B cell (primary cell): ENCODE measurements at regions of chr12 and their contacts with region 1.

Region 1: DNA sequence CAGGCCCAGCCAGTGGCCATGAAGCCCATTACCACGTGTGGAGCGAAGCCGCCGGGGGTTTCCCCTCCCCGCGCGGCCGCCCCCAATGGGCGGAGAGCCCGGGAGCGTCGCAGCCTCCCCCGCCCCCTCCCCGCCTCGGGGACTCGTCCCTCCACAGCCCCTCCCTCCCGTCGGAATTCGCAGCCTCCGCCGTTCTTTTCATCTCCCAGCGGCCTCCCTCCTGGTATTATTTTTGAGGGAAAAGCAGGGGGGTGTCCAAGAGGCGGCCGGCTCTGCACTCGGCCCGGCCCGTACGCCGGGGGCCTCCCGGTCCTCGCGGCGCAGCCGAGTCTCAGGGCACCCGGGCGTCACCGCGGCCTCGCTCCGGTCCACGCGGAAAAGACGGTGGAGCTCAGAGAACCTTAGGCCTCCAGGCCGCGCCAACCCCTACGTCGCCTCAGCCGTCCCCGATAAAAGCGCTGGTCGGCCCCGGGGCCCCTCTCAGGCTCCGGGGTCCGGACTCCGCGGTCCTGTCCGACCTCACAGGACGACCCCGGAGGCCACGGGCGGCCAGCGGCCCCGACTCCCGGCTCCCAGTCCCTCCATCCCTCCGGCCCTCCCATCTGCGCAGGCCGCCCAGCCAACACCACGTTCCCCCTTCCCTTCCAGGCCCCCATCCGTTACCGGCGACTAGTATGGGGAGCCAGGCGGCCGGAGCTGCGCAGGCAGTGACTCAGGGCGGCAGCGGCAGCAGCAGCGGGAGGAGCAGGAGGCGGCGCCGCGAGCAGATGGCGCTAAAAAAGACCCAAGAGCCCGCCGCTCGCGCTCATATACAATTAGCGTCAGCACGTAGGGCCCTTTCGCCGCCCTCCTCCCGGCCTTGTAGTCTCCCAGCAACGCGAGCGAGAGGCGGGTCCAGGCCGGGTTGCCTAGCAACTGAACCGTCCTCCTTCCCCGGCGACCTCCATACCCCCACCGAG is at the start of gene NAP1L1:
- DNase-seq: peak; percentile 98
- ATAC-seq: peak; percentile 82
- H3K4me3 ChIP-seq: peak within 1 kb of the TSS; percentile 56 to 94 (median 89)
- H3K4me3 Mint-ChIP-seq: peak within 1 kb of the TSS; percentile 99
- H3K27ac ChIP-seq: peak within 1 kb of the TSS; percentile 96 to 98
- H3K27ac Mint-ChIP-seq: peak within 1 kb of the TSS; percentile 99
- H3K4me1 ChIP-seq: peaks cover 26 to 44% of the 10 kb centered on the region in 2 donors
- H3K4me1 Mint-ChIP-seq: peaks cover 50% of the 10 kb centered on the region
- H3K27me3 ChIP-seq: no peaks in the 10 kb centered on the region
- H3K27me3 Mint-ChIP-seq: no peaks in the 10 kb centered on the region
- CTCF ChIP-seq: no peak
- total RNA-seq, gene NAP1L1: 751 and 766 TPM in 2 replicates

Region 2: GRCh38 chr12:75390899-75391538 is 693.2 kb before region 1 on chr12 and contains the start of gene GLIPR1L2:
- CTCF ChIA-PET with region 1: interaction called, 3 read pairs
- POLR2A ChIA-PET with region 1: no interaction called
- intact Hi-C with region 1: loop called (anchors 1 kb)
- DNase-seq: peak; percentile 94
- ATAC-seq: peak; percentile 94
- H3K4me3 ChIP-seq: peak within 1 kb of the TSS; percentile 66 to 85 (median 75)
- H3K4me3 Mint-ChIP-seq: peak within 1 kb of the TSS; percentile 98
- H3K27ac ChIP-seq: peak within 1 kb of the TSS; percentile 73 to 85
- H3K27ac Mint-ChIP-seq: peak within 1 kb of the TSS; percentile 99
- H3K4me1 ChIP-seq: peaks cover 23 to 24% of the 10 kb centered on the region in 2 donors
- H3K4me1 Mint-ChIP-seq: peaks cover 33% of the 10 kb centered on the region
- H3K27me3 ChIP-seq: no peaks in the 10 kb centered on the region
- H3K27me3 Mint-ChIP-seq: no peaks in the 10 kb centered on the region
- CTCF ChIP-seq: peak; percentile 81
- total RNA-seq, gene GLIPR1L2: 0.46 and 0.91 TPM in 2 replicates

Region 3: GRCh38 chr12:76020731-76021672 is 63.2 kb before region 1 on chr12:
- CTCF ChIA-PET with region 1: no interaction called
- POLR2A ChIA-PET with region 1: no interaction called
- intact Hi-C with region 1: no loop called
- DNase-seq: no peak
- ATAC-seq: no peak
- H3K4me3 ChIP-seq: no peak overlapping the region
- H3K4me3 Mint-ChIP-seq: no peak overlapping the region
- H3K27ac ChIP-seq: no peak overlapping the region
- H3K27ac Mint-ChIP-seq: peak overlapping the region; percentile 18
- H3K4me1 ChIP-seq: no peaks in the 10 kb centered on the region
- H3K4me1 Mint-ChIP-seq: peaks cover 10% of the 10 kb centered on the region
- H3K27me3 ChIP-seq: peaks cover 0 to 7% (median 5%) of the 10 kb centered on the region in 4 experiments
- H3K27me3 Mint-ChIP-seq: peaks cover 38% of the 10 kb centered on the region
- CTCF ChIP-seq: no peak

Region 4: GRCh38 chr12:76031537-76032073 is 52.6 kb before region 1 on chr12 and contains the start of gene PHLDA1:
- CTCF ChIA-PET with region 1: interaction called, 4 read pairs
- POLR2A ChIA-PET with region 1: no interaction called
- intact Hi-C with region 1: loop called (anchors 1 kb)
- DNase-seq: peak; percentile 93
- ATAC-seq: peak; percentile 87
- H3K4me3 ChIP-seq: peak within 1 kb of the TSS; percentile 48 to 89 (median 79)
- H3K4me3 Mint-ChIP-seq: peak within 1 kb of the TSS; percentile 96
- H3K27ac ChIP-seq: peak within 1 kb of the TSS; percentile 19 to 81
- H3K27ac Mint-ChIP-seq: peak within 1 kb of the TSS; percentile 92
- H3K4me1 ChIP-seq: peaks cover 18 to 23% of the 10 kb centered on the region in 2 donors
- H3K4me1 Mint-ChIP-seq: peaks cover 25% of the 10 kb centered on the region
- H3K27me3 ChIP-seq: peaks cover 2 to 29% (median 25%) of the 10 kb centered on the region in 4 experiments
- H3K27me3 Mint-ChIP-seq: peaks cover 23% of the 10 kb centered on the region
- CTCF ChIP-seq: peak; percentile 48
- total RNA-seq, gene PHLDA1: 1.7 TPM in 2 replicates

Region 5: DNA sequence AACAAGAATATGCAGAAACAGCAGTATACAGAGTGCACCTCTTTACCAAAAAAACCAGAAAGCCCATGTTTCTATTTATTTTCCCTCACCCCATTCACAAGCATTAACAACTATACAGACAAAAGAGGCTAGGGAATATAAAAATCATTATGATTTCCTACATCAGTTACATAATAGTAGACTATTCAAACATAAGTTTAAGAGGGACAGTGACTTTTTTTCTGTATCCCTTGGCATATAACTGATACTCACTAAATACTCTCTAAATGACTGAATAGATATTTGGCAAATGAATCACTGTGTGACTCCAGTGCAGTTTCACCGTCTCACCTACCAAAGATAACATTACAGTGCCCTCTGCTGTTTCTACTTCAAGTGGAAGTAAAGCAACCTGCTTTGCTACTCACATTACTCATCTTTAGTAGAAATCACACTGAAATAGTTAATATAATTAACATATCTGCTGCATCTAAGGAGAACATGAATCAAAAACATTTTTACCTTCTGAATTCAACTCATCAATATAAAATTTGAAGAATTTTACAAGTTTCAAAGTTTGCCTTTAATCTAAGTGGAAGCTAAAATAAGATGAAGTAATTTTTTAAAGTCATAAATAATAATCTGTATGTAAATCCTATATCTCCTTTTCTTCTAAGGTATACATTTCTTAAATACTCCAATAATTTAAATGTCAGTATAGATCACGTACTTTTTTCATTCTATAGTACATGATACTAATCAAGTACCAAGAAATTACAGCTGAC is 371.6 kb after region 1 on chr12:
- CTCF ChIA-PET with region 1: no interaction called
- POLR2A ChIA-PET with region 1: no interaction called
- intact Hi-C with region 1: loop called (anchors 2 kb)
- DNase-seq: peak; percentile 50
- ATAC-seq: peak; percentile 41
- H3K4me3 ChIP-seq: no peak overlapping the region
- H3K4me3 Mint-ChIP-seq: no peak overlapping the region
- H3K27ac ChIP-seq: no peak overlapping the region
- H3K27ac Mint-ChIP-seq: no peak overlapping the region
- H3K4me1 ChIP-seq: peaks cover 0 to 4% of the 10 kb centered on the region in 2 donors
- H3K4me1 Mint-ChIP-seq: peaks cover 13% of the 10 kb centered on the region
- H3K27me3 ChIP-seq: no peaks in the 10 kb centered on the region
- H3K27me3 Mint-ChIP-seq: no peaks in the 10 kb centered on the region
- CTCF ChIP-seq: peak; percentile 70

Region 6: DNA sequence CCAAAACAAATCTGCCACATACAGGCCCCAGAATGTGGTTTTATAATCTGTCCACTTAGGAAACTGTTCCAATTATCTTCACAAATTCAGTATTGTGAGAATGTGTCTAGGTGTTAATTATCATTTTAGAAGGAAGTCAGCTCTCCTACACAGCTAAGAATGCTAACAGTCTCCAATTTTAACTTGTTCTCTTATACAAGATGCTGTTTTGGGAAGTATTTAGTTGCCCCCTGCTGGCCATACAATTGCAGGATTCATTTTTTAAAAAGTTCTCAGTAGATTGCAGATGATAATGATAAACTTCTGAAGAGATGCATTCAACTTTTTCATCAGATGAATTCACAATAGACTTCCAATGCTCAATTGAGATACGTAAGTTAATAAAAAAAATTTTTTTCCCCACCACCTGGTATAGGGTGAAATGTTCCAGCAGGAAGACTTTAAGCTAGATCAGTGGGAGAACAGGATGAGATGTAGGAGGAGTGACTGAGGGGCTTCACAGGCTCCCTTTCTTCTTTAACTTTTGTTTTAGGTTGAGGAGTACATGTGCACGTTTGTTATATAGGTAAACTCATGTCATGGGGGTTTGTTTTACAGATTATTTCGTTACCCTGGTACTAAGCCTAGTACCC is 502.7 kb after region 1 on chr12:
- CTCF ChIA-PET with region 1: interaction called, 6 read pairs
- POLR2A ChIA-PET with region 1: no interaction called
- intact Hi-C with region 1: loop called (anchors 1 kb)
- DNase-seq: peak; percentile 69
- ATAC-seq: peak; percentile 57
- H3K4me3 ChIP-seq: no peak overlapping the region
- H3K4me3 Mint-ChIP-seq: no peak overlapping the region
- H3K27ac ChIP-seq: no peak overlapping the region
- H3K27ac Mint-ChIP-seq: no peak overlapping the region
- H3K4me1 ChIP-seq: no peaks in the 10 kb centered on the region
- H3K4me1 Mint-ChIP-seq: peaks cover 5% of the 10 kb centered on the region
- H3K27me3 ChIP-seq: no peaks in the 10 kb centered on the region
- H3K27me3 Mint-ChIP-seq: no peaks in the 10 kb centered on the region
- CTCF ChIP-seq: peak; percentile 92